Endothelial cell of umbilical vein (primary cell): ENCODE measurements at regions of chr3 and their contacts with region 1.

Region 1: GRCh38 chr3:117019082-117019713 is 309.6 kb downstream of the TUSC7 start:
- DNase-seq: peak; percentile 67
- H3K4me3 ChIP-seq: no peak overlapping the region
- H3K27ac ChIP-seq: no peak overlapping the region
- H3K4me1 ChIP-seq: no peaks in the 10 kb centered on the region
- H3K27me3 ChIP-seq: peaks cover 4 to 9% of the 10 kb centered on the region in 2 experiments
- CTCF ChIP-seq: peak; percentile 73 to 78
- POLR2A ChIP-seq: no peak

Region 2: DNA sequence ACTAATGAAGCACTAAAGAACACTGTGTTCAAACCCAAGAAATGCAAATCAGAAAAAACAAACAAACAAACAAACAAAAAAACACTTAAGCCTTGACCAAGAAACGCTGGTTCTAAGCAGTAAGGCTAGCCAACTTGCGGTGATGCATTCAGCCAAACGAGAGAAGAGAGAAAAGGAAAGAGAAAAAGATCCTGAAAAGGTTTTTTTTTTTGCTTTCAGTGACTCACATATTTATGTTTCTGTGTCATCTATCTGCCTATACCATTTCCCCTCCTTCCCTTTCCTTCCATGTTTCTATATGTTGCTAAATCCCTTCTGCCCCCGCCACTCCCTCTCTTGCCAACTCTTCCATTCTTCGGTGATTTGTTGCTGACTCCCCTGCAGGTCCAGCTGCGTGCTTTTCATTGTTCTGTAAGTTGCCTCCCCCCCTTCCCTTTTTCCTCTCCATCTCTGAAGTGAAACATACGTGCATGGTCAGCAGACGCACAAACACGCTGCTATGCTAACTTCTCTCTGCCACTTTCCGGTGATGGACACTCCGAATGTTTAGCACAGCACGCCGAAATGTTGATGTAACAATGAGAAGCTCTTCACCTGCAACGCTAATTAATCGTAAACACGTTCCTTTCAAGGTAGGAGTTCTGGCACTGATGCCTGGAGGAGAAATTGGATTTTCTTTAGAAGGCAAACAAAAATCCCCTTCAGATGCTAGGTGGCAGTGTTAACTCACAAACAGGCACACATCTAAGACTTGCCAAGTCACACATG is 155.2 kb before region 1 on chr3:
- CTCF ChIA-PET with region 1: interaction called, 9 read pairs
- POLR2A ChIA-PET with region 1: no interaction called
- dilution Hi-C with region 1: no loop called
- intact Hi-C with region 1: loop called (anchors 1 kb)
- DNase-seq: peak; percentile 79
- H3K4me3 ChIP-seq: peak overlapping the region; percentile 17 to 66 (median 28)
- H3K27ac ChIP-seq: no peak overlapping the region
- H3K4me1 ChIP-seq: peaks cover 3% of the 10 kb centered on the region
- H3K27me3 ChIP-seq: peaks cover 4% of the 10 kb centered on the region in 2 experiments
- CTCF ChIP-seq: peak; percentile 41 to 45
- POLR2A ChIP-seq: no peak

Region 3: DNA sequence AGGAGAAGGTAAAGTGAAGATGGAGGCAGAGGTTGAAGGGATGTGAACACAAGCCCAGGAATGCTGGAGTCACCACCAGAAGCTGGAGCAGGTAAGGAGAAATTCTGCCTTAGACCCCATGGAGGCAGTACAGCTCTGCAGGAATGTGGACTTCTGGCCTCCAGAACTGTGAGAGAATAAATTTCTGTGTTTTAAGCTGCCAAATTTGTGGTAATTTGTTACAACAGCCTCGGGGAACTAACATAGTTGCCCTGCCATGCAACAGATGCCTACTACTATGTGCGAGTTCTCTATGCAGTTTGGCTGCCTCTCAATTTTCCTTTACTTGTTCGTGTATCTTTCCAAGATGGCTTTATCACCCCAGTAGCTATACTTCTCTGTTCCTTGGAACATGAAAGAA is 84.5 kb after region 1 on chr3:
- CTCF ChIA-PET with region 1: no interaction called
- POLR2A ChIA-PET with region 1: no interaction called
- dilution Hi-C with region 1: no loop called
- intact Hi-C with region 1: no loop called
- DNase-seq: no peak
- H3K4me3 ChIP-seq: no peak overlapping the region
- H3K27ac ChIP-seq: no peak overlapping the region
- H3K4me1 ChIP-seq: no peaks in the 10 kb centered on the region
- H3K27me3 ChIP-seq: no peaks in the 10 kb centered on the region
- CTCF ChIP-seq: no peak
- POLR2A ChIP-seq: no peak

Region 4: DNA sequence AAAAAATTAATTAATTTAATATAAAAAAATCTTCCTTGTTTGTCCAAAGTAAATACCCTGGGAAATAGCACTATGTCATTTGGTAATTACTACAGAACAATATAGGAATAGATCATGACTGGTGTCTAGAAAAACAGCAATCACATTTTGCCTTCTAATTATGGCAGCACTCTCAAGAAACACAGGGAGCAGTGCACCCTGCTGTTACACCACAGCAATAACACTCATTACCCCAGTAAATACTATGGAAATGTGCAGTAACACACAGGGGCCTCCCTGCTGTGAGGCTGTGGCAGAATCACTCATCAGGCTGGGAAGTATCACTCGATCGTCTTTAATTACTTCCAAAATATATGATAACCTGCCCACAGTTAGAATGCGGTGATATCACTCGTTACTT is 336.4 kb after region 1 on chr3:
- CTCF ChIA-PET with region 1: interaction called, 5 read pairs
- POLR2A ChIA-PET with region 1: no interaction called
- dilution Hi-C with region 1: no loop called
- intact Hi-C with region 1: loop called (anchors 1 kb)
- DNase-seq: peak; percentile 45
- H3K4me3 ChIP-seq: no peak overlapping the region
- H3K27ac ChIP-seq: no peak overlapping the region
- H3K4me1 ChIP-seq: no peaks in the 10 kb centered on the region
- H3K27me3 ChIP-seq: no peaks in the 10 kb centered on the region
- CTCF ChIP-seq: peak; percentile 32 to 49
- POLR2A ChIP-seq: no peak

Region 5: DNA sequence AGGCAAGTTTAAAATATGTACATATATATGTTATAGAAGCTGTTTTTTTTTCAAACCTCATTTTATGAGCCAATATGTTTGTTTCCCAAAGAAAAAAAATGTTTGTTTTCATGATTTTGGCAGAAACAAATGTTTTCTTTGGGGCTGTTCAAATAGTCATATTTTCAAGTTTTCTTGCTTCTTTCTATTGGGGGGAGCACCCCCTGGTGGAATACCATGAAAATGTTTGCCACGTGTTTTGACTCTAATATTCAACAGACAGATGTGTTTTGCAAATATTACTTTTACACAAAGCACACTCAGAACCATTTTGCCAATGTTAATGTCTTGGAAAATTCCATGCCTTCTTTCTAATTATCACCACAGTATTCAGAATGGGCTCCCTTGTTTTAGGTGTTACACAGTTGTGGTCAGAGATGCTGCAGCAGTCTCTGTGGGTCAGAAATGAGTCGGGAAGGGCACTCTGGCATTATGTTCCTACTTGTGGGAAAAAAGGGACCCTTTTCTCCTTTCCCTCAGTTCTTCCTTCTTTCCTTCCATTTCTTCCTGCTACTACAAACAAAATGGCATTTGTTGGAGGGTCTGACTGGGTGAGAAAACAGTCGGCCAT is 507.4 kb after region 1 on chr3:
- CTCF ChIA-PET with region 1: interaction called, 27 read pairs
- POLR2A ChIA-PET with region 1: no interaction called
- dilution Hi-C with region 1: no loop called
- intact Hi-C with region 1: loop called (anchors 1 kb)
- DNase-seq: peak; percentile 40
- H3K4me3 ChIP-seq: no peak overlapping the region
- H3K27ac ChIP-seq: no peak overlapping the region
- H3K4me1 ChIP-seq: no peaks in the 10 kb centered on the region
- H3K27me3 ChIP-seq: peaks cover 0 to 3% of the 10 kb centered on the region in 2 experiments
- CTCF ChIP-seq: peak; percentile 42 to 53
- POLR2A ChIP-seq: no peak

Region 6: GRCh38 chr3:117997201-117998049 is 978.2 kb after region 1 on chr3:
- CTCF ChIA-PET with region 1: interaction called, 7 read pairs
- POLR2A ChIA-PET with region 1: no interaction called
- dilution Hi-C with region 1: no loop called
- intact Hi-C with region 1: loop called (anchors 1 kb)
- DNase-seq: peak; percentile 84
- H3K4me3 ChIP-seq: peak overlapping the region in 2 of 3 experiments; percentile 32 to 44
- H3K27ac ChIP-seq: no peak overlapping the region
- H3K4me1 ChIP-seq: peaks cover 4% of the 10 kb centered on the region
- H3K27me3 ChIP-seq: peaks cover 9 to 11% of the 10 kb centered on the region in 2 experiments
- CTCF ChIP-seq: peak; percentile 84 to 97
- POLR2A ChIP-seq: no peak

Region 7: GRCh38 chr3:118110211-118110610 is 1091.0 kb after region 1 on chr3:
- CTCF ChIA-PET with region 1: no interaction called
- POLR2A ChIA-PET with region 1: no interaction called
- dilution Hi-C with region 1: no loop called
- intact Hi-C with region 1: no loop called
- DNase-seq: no peak
- H3K4me3 ChIP-seq: no peak overlapping the region
- H3K27ac ChIP-seq: no peak overlapping the region
- H3K4me1 ChIP-seq: no peaks in the 10 kb centered on the region
- H3K27me3 ChIP-seq: no peaks in the 10 kb centered on the region
- CTCF ChIP-seq: no peak
- POLR2A ChIP-seq: no peak